ENCODE measurements at regions of chr2 and their contacts with region 1.

Region 1: GRCh38 chr2:39837856-39838453 is 58.9 kb upstream of the THUMPD2 start:
- DNase-seq: peak; percentile 24
- H3K4me3 ChIP-seq: no peak overlapping the region
- H3K27ac ChIP-seq: no peak overlapping the region
- H3K4me1 ChIP-seq: no peaks in the 10 kb centered on the region
- H3K27me3 ChIP-seq: no peaks in the 10 kb centered on the region
- CTCF ChIP-seq: peak; percentile 70

Region 2: GRCh38 chr2:40721595-40721994 is 883.6 kb after region 1 on chr2:
- intact Hi-C with region 1: no loop called
- DNase-seq: no peak
- H3K4me3 ChIP-seq: no peak overlapping the region
- H3K27ac ChIP-seq: no peak overlapping the region
- H3K4me1 ChIP-seq: no peaks in the 10 kb centered on the region
- H3K27me3 ChIP-seq: no peaks in the 10 kb centered on the region
- CTCF ChIP-seq: no peak

Region 3: GRCh38 chr2:41782306-41783158 is 1944.6 kb after region 1 on chr2:
- intact Hi-C with region 1: loop called (anchors 5 kb)
- DNase-seq: peak; percentile 24
- H3K4me3 ChIP-seq: no peak overlapping the region
- H3K27ac ChIP-seq: no peak overlapping the region
- H3K4me1 ChIP-seq: no peaks in the 10 kb centered on the region
- H3K27me3 ChIP-seq: no peaks in the 10 kb centered on the region
- CTCF ChIP-seq: peak; percentile 67

Measured in colonic mucosa (tissue), 4 donors.